K562 (cell line): ENCODE measurements at regions of chr19 and their contacts with region 1.

Region 1: GRCh38 chr19:56140583-56141416 is at the start of gene ZNF444:
- DNase-seq: peak; percentile 95 to 98 (median 96)
- ATAC-seq: peak; percentile 96
- H3K4me3 ChIP-seq: peak within 1 kb of the TSS; percentile 67
- H3K27ac ChIP-seq: peak within 1 kb of the TSS; percentile 98
- H3K4me1 ChIP-seq: peaks cover 14 to 18% of the 10 kb centered on the region in 2 experiments
- H3K27me3 ChIP-seq: no peaks in the 10 kb centered on the region
- CTCF ChIP-seq: no peak
- EP300 ChIP-seq: no peak; the same call in 1 of the 2 replicates
- POLR2A ChIP-seq: peak; percentile 82
- RAD21 ChIP-seq: no peak
- polyA plus RNA-seq, gene ZNF444: 0.39 to 0.49 TPM

Region 2: GRCh38 chr19:55166530-55167268 is 974.1 kb before region 1 on chr19 and contains the start of gene DNAAF3:
- CTCF ChIA-PET with region 1: no interaction called
- POLR2A ChIA-PET with region 1: no interaction called
- in situ Hi-C with region 1: loop called (anchors 25 kb)
- intact Hi-C with region 1: no loop called
- DNase-seq: peak; percentile 98 to 100 (median 99)
- ATAC-seq: peak; percentile 99
- H3K4me3 ChIP-seq: peak within 1 kb of the TSS; percentile 54
- H3K27ac ChIP-seq: peak within 1 kb of the TSS; percentile 78
- H3K4me1 ChIP-seq: peaks cover 5 to 29% of the 10 kb centered on the region in 2 experiments; a peak in 4 of 5 replicates
- H3K27me3 ChIP-seq: no peaks in the 10 kb centered on the region
- CTCF ChIP-seq: no peak
- EP300 ChIP-seq: no peak
- POLR2A ChIP-seq: no peak
- RAD21 ChIP-seq: no peak
- polyA plus RNA-seq, gene DNAAF3: 29.7 to 54.4 TPM

Region 3: DNA sequence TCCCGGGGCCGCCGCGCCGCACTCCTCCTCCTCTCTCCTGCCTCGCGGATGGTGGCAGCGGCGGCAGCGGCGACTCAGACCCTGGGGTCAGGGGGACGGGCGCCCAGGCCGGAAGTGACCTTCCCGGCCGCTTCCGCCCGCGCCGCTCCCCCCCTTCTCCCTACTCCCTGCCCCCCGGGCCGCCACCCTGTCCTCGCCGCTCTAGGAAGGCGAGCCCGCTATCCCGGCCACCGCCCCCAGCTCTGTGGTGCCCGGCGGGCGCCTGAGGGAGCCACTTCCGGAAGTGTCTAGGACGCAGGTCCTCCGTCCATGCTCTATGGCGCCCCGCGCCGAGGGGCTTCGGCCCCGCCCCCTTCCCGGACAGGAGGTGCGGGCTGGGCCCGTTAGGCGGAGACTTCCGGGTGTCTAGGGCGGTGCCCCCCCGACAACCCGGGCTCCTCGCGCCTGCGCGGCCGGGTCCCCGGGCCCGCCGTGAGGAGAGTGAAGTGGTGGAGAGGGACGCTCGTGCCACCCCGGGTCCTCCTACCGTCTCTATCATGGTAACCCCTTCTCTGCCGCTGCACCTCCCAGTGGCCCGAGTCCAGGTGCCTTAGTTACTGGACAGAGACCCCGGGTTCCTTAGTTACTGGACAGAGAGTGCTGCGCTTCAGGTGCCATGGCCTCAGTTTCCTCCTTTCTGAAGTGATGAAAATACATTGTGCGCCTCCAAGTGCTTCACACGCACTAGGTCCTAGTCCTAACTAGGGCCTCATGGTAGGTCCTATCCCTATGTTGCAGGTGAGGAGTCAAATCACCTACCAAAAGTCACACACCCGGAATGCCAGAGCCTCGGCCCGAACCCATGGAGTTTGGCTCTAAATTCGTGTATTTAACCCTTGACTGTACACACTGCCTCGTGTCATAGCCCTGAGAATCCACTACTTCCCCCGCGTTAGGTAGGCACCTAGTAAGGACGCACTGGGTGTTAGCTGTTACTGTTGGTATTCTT is 19.3 kb before region 1 on chr19 and contains the start of gene ZNF787:
- CTCF ChIA-PET with region 1: no interaction called
- POLR2A ChIA-PET with region 1: interaction called, 8 read pairs
- in situ Hi-C with region 1: no loop called
- intact Hi-C with region 1: loop called (anchors 2 kb)
- DNase-seq: peak; percentile 94 to 99 (median 96)
- ATAC-seq: peak; percentile 85
- H3K4me3 ChIP-seq: peak within 1 kb of the TSS; percentile 95
- H3K27ac ChIP-seq: peak within 1 kb of the TSS; percentile 99
- H3K4me1 ChIP-seq: peaks cover 31 to 56% of the 10 kb centered on the region in 2 experiments
- H3K27me3 ChIP-seq: no peaks in the 10 kb centered on the region
- CTCF ChIP-seq: no peak
- EP300 ChIP-seq: no peak
- POLR2A ChIP-seq: peak; percentile 76
- RAD21 ChIP-seq: peak in 1 of 2 experiments; percentile 5; a peak in 1 of 4 replicates
- polyA plus RNA-seq, gene ZNF787: 0.45 to 0.53 TPM